Activated CD8-positive, alpha-beta memory T cell treated with anti-CD3 and anti-CD28 coated beads, Interleukin-2, amount 10 ng/mL, durations not matched to agents 7 days and 5 days (primary cell): ENCODE measurements at regions of chr11 and their contacts with region 1.

Region 1: DNA sequence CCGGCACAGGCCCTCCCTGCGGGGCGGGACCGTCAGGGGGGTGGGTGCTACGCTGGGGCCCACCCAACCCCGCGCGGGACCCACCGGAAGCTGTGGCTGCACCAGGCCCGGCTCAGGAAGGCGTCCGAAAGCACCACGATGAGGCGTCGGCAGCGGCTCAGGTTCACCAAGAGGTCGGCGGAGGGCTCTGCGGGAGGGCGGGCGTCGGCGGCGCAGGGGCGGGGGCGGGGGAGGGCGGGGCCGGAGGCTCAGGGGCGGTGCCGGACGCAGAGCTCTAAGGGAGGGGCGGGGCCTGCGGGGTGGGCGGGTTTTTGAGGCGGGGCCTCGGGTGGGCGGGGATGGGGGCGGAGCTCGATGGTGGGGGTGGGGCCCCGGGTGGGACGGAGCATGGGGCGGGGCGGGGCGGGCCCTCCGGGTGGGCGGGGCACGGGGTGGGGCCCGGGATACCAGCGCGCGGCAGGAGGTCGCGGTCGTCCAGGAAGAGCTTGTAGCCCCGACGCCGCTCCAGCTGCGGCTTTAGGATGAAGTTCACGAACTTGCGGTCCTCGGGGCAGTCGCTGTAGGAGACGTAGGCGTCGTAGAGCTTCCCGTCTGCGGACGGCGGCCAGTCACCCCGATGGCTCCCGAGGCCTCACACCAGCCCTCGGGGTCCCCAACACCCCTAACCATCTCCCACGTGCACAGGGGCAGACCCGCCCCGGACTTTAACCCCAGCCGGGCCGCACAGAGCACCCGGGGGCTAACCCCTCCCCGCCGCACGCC is 7.6 kb downstream of the SIGIRR start:
- DNase-seq: peak; percentile 95
- ATAC-seq: peak; percentile 91
- H3K4me3 Mint-ChIP-seq: peak overlapping the region; percentile 9
- H3K27ac Mint-ChIP-seq: peak overlapping the region; percentile 49
- H3K4me1 Mint-ChIP-seq: peaks cover 13% of the 10 kb centered on the region
- H3K27me3 Mint-ChIP-seq: no peaks in the 10 kb centered on the region

Region 2: DNA sequence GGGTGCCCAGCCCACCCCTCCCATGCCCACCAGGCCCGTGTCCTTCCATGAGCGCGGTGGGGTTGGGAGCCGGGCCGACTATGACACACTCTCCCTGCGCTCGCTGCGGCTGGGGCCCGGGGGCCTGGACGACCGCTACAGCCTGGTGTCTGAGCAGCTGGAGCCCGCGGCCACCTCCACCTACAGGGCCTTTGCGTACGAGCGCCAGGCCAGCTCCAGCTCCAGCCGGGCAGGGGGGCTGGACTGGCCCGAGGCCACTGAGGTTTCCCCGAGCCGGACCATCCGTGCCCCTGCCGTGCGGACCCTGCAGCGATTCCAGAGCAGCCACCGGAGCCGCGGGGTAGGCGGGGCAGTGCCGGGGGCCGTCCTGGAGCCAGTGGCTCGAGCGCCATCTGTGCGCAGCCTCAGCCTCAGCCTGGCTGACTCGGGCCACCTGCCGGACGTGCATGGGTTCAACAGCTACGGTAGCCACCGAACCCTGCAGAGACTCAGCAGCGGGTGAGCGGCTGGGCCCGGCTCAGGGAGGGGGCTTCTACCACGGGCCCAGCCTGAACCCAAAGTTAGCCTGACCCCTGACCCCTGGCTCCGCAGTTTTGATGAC is 10.1 kb before region 1 on chr11:
- CTCF ChIA-PET with region 1: interaction called, 19 read pairs
- DNase-seq: peak; percentile 74
- ATAC-seq: peak; percentile 86
- H3K4me3 Mint-ChIP-seq: no peak overlapping the region
- H3K27ac Mint-ChIP-seq: no peak overlapping the region
- H3K4me1 Mint-ChIP-seq: no peaks in the 10 kb centered on the region
- H3K27me3 Mint-ChIP-seq: no peaks in the 10 kb centered on the region

Region 3: GRCh38 chr11:494761-495536 is 87.8 kb after region 1 on chr11:
- CTCF ChIA-PET with region 1: no interaction called
- DNase-seq: no peak
- ATAC-seq: no peak
- H3K4me3 Mint-ChIP-seq: no peak overlapping the region
- H3K27ac Mint-ChIP-seq: no peak overlapping the region
- H3K4me1 Mint-ChIP-seq: peaks cover 12% of the 10 kb centered on the region
- H3K27me3 Mint-ChIP-seq: no peaks in the 10 kb centered on the region